ENCODE measurements at regions of chr5 and their contacts with region 1.

Region 1: GRCh38 chr5:94192658-94193391 is 425.6 kb downstream of the KIAA0825 start:
- DNase-seq: peak; percentile 6
- CTCF ChIP-seq: no peak

Region 2: GRCh38 chr5:94181895-94182294 is 10.9 kb before region 1 on chr5:
- CTCF ChIA-PET with region 1: interaction called, 23 read pairs
- POLR2A ChIA-PET with region 1: no interaction called
- DNase-seq: no peak
- CTCF ChIP-seq: no peak